KBM-7 (cell line): ENCODE measurements at regions of chr19 and their contacts with region 1.

Region 1: DNA sequence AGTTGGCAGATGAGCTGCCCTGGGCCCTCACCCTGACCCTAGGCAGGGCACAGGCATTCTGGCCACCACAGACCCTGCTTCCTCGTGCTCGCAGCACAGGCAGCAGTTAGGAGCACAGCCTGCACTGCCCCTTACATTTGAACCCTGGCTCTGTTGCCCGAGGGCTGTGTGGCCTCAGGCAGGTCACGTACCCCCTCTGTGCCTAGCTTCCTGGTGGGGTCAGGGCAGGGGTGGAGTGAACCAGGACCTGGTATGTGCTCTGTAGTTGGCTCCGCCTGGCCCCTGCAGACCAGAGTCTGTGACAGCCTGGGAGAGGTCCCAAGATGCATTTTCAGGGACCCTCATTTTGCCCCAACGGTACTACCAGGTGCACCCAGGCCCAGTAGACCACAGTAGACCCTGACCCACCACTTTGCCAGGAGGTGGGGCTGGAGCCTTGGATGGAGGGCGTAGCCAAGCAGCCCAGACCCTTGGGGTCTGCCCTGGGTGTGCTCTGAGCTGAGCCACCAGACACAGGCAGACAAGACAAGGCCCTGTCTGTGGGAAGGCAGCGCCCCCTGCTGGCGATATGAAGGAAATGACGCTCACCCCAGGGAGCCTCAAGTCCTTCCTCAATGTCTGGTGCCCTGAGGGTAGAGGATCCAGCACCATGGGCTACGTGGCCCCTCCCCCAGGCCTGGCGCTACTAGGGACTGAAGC is 9.1 kb downstream of the LYL1 start:
- DNase-seq: peak; percentile 92

Region 2: DNA sequence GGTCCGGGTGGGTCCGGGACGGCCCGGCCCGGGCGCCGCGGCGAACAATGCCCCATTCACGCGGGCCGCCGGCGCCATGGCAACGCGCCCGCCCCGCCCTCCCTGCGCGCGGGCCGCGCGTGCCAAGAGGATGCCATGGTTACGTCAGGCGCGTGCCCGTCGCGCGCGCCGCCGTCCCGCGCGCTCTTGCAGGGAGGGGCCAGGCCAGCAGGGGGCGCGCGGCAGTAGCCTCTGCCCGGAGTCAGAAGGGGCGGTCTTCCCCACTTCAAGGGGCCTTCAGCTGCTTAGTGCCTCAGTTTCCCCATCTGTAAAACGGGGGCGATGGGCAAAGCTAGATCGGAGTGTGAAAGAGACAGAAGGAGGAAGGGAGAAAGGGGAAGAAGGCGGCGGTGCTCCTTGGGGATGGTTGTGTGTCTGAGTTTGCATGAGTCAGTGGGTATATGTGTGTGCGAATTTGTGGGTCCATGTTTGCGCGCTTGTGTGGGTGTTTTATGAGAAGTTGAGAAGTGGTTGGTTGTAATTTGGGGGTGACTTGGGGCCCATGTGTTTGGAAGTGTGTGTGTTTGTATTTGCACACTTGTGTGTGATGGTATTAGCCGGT is 109.9 kb before region 1 on chr19:
- in situ Hi-C with region 1: loop called (anchors 25 kb)
- DNase-seq: peak; percentile 91